Psoas muscle (tissue), 8 donors: ENCODE measurements at regions of chr13 and their contacts with region 1.

Region 1: GRCh38 chr13:21060987-21061763 is at the start of gene LATS2:
- DNase-seq: peak; percentile 97 to 98
- ATAC-seq: peak; percentile 92 to 95 (median 94)
- H3K4me3 ChIP-seq: peak within 1 kb of the TSS; percentile 96
- H3K27ac ChIP-seq: peak within 1 kb of the TSS; percentile 100
- H3K4me1 ChIP-seq: peaks cover 40% of the 10 kb centered on the region
- H3K27me3 ChIP-seq: no peaks in the 10 kb centered on the region
- CTCF ChIP-seq: peak; percentile 8
- total RNA-seq, gene LATS2: 23.7 to 27.4 (median 26.1) TPM

Region 2: DNA sequence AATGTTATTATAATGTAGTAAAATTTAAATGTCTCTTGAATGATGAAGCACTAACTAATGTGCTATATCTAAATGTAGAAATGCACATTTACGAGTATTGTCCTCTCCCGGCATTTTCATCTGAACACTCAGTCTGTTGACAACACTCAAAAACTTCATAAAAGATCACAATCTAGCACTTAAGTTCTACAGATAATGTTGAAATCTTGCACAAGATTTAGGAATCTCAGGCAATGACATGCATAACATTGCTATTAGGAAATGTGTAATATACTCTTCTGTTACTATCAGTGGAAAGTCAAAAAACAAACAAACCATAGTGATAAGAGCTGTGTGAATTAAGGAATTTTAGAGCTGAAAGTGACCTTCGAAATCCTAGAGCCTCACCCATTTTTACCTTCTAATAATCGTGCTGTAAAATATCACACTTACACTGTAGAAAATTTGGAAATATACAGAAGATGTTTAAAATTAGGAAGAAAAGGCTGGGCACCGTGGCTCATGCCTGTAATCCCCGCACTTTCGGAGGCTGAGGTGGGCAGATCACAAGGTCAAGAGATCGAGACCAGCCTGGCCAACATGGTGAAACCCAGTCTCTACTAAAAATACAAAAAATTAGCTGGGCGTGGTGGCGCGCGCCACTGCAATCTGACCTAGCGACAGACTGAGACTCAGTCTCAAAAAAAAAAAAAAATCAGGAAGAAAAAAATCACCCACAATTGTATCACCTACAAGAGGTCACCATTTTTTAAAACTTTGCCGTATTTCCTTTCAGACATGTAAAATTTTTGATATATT is 120.9 kb before region 1 on chr13:
- intact Hi-C with region 1: loop called (anchors 5 to 10 kb)
- DNase-seq: no peak
- ATAC-seq: peak in 1 of 4 donors; percentile 17
- H3K4me3 ChIP-seq: no peak overlapping the region
- H3K27ac ChIP-seq: peak overlapping the region; percentile 78
- H3K4me1 ChIP-seq: peaks cover 14% of the 10 kb centered on the region
- H3K27me3 ChIP-seq: no peaks in the 10 kb centered on the region
- CTCF ChIP-seq: no peak

Region 3: GRCh38 chr13:20945952-20946383 is 115.2 kb before region 1 on chr13:
- intact Hi-C with region 1: loop called (anchors 5 to 10 kb)
- DNase-seq: peak in 1 of 2 donors; percentile 19
- ATAC-seq: peak in 2 of 4 donors; percentile 19 to 26
- H3K4me3 ChIP-seq: peak overlapping the region; percentile 51
- H3K27ac ChIP-seq: no peak overlapping the region
- H3K4me1 ChIP-seq: peaks cover 4% of the 10 kb centered on the region
- H3K27me3 ChIP-seq: peaks cover 0 to 14% (median 0%) of the 10 kb centered on the region in 3 donors
- CTCF ChIP-seq: no peak

Region 4: GRCh38 chr13:20960663-20961309 is 100.4 kb before region 1 on chr13:
- intact Hi-C with region 1: no loop called
- DNase-seq: no peak
- ATAC-seq: peak in 3 of 4 donors; percentile 61 to 74 (median 69)
- H3K4me3 ChIP-seq: peak overlapping the region; percentile 19
- H3K27ac ChIP-seq: no peak overlapping the region
- H3K4me1 ChIP-seq: no peaks in the 10 kb centered on the region
- H3K27me3 ChIP-seq: no peaks in the 10 kb centered on the region
- CTCF ChIP-seq: no peak

Region 5: GRCh38 chr13:20997430-20998161 is 63.6 kb before region 1 on chr13:
- intact Hi-C with region 1: loop called in 1 of 2 experiments (anchors 5 kb)
- DNase-seq: peak in 1 of 2 donors; percentile 74
- ATAC-seq: peak in 2 of 4 donors; percentile 41 to 53
- H3K4me3 ChIP-seq: no peak overlapping the region
- H3K27ac ChIP-seq: peak overlapping the region; percentile 25
- H3K4me1 ChIP-seq: peaks cover 42% of the 10 kb centered on the region
- H3K27me3 ChIP-seq: no peaks in the 10 kb centered on the region
- CTCF ChIP-seq: no peak

Region 6: GRCh38 chr13:21014502-21015170 is 46.5 kb before region 1 on chr13:
- intact Hi-C with region 1: loop called in 1 of 2 experiments (anchors 5 kb)
- DNase-seq: peak; percentile 68 to 92
- ATAC-seq: peak; percentile 86 to 88 (median 86)
- H3K4me3 ChIP-seq: no peak overlapping the region
- H3K27ac ChIP-seq: peak overlapping the region; percentile 83
- H3K4me1 ChIP-seq: peaks cover 74% of the 10 kb centered on the region
- H3K27me3 ChIP-seq: no peaks in the 10 kb centered on the region
- CTCF ChIP-seq: no peak

Region 7: GRCh38 chr13:21022056-21022979 is 38.9 kb before region 1 on chr13:
- intact Hi-C with region 1: loop called (anchors 5 kb)
- DNase-seq: no peak
- ATAC-seq: peak in 1 of 4 donors; percentile 31
- H3K4me3 ChIP-seq: no peak overlapping the region
- H3K27ac ChIP-seq: no peak overlapping the region
- H3K4me1 ChIP-seq: peaks cover 49% of the 10 kb centered on the region
- H3K27me3 ChIP-seq: no peaks in the 10 kb centered on the region
- CTCF ChIP-seq: no peak

Region 8: DNA sequence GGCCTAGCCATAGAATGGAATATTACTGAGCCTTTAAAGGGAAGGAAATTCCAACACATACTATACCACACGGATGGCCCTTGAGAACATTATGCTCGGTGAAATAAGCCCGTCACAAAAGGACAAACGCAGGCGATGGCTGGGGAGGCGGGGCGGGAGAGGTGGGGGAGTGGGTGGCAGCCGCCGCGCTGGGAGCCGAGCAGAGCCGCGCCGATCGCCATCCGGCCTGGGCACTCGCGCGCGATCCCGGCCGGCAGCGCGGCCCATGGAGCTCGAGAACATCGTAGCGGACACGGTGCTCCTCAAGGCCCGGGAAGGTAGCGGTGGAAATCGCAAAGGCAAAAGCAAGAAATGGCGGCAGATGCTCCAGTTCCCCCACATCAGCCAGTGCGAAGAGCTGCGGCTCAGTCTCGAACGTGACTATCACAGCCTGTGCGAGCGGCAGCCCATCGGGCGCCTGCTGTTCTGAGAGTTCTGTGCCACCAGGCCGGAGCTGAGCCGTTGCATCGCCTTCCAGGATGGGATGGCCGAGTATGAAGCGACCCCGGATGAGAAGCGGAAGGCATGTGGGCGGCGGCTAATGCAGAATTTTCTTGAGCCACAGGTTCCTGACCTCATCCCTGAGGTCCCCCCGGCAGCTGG is 257.8 kb after region 1 on chr13:
- intact Hi-C with region 1: no loop called
- DNase-seq: no peak
- ATAC-seq: no peak
- H3K4me3 ChIP-seq: no peak overlapping the region
- H3K27ac ChIP-seq: no peak overlapping the region
- H3K4me1 ChIP-seq: no peaks in the 10 kb centered on the region
- H3K27me3 ChIP-seq: no peaks in the 10 kb centered on the region
- CTCF ChIP-seq: no peak